KBM-7 (cell line): ENCODE measurements at regions of chr12 and their contacts with region 1.

Region 1: DNA sequence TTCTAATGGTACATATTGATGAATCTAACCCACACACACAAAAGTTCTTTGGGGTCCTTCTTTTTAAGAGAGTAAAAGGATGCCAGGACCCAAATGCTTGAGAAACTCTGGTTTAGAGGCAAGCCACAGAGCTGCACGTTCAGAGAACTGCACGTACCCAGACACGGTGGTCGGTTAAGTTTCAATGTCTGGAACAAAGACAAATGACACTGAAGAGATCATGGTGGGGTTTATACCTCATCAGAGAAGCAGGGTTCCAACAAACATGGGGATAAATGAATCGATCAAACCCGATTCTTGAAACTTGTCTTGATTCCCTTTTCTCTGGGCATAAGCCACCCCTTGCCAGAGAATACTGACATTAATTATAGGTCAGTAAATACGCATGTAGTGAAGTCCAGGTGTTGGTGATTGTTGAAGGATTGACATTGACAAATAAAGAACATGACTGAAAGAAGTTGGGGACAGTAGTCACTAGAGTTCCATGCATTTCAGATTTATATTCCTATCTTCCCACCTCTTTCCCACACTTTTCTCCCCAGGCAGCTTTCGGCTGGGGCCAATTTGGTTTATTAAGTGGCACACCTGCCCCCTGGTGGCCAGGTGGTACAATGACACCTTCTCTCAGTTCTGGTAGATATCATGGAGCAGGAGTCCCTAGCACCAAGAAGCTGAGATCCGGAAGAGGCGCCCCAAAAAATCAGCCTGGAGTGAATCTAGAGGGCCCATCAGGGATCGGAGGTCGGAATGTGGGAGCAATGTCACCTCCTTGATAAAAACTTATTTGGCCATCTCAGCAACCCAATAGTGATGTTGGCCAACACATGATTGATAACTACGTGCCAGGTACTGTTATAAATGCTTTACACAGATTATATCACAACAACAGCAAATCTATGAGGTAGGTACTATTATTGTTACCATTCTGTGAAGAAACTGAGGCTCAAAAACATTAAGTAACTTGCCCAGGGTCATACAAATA is 17.8 kb upstream of the HDAC7 start:
- DNase-seq: peak; percentile 77

Region 2: GRCh38 chr12:47742253-47742825 is 95.1 kb before region 1 on chr12:
- in situ Hi-C with region 1: loop called (anchors 25 kb)
- DNase-seq: peak; percentile 64

Region 3: DNA sequence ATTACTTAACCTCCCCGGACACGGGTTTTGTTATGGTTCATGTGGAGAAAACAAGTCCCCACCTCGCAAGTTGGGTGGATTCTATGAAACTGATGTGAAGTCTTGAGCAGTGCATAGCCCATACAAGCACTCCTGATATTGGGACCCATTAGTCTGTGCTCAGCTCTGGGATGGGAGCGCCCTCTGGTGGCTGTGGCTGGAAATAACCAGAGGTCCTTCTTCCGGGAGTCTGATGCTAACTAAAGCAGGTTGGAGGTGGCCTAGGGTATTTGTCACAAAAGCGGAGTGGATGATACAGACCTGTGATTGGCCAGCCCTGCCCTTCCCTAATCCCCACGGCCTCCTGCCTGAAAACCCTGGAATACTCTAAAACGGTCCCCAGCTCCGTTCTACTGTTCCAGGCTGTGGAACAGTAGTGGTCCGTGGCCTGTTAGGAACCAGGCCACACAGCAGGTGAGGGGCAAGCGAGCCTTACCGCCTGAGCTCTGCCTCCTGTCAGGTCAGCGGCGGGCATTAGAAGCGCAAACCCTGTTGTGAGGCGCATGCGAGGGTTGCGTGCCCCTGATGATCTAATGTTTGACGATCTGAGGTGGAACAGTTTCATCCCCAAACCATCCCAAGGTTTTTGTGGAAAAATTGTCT is 58.1 kb before region 1 on chr12:
- in situ Hi-C with region 1: loop called (anchors 10 kb)
- DNase-seq: peak; percentile 90

Region 4: DNA sequence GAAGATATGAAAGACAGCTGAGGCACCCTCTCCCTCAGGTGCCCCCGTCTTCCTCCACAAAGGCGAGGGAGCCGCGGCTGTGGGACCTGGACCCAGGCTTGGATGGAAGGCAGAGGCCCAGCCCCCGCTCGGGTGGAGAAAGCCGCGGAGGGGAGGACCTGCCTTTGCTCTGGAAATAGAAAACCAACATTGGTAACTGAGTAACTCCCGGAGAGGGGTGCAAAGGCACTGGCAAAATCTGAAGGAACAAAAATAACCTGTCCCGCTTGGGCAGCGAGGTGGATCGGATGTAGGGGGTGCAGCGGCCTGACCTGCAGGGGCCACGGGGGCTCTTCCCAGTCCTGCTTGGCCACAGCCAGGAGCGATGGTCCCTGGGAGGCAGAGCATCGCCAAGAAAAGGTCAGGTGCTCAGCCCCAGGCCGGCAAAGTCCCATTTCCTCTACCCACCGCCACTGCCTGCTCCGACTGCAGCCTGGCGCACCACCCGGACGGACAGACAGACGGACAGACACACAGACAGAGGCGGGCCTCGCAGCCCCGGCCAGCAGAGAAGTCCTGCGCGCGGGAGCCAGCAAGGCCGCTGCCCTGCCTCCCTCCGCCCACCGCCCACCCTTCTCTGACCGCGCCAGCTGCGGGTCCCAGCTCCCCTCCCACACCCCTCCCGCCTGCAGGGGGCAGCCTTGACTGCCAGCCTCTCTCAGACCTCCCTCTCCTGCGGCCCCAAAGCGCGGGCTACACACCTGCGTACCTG is 104.5 kb after region 1 on chr12:
- in situ Hi-C with region 1: no loop called
- DNase-seq: peak; percentile 18